ENCODE measurements at regions of chr13 and their contacts with region 1.

Region 1: DNA sequence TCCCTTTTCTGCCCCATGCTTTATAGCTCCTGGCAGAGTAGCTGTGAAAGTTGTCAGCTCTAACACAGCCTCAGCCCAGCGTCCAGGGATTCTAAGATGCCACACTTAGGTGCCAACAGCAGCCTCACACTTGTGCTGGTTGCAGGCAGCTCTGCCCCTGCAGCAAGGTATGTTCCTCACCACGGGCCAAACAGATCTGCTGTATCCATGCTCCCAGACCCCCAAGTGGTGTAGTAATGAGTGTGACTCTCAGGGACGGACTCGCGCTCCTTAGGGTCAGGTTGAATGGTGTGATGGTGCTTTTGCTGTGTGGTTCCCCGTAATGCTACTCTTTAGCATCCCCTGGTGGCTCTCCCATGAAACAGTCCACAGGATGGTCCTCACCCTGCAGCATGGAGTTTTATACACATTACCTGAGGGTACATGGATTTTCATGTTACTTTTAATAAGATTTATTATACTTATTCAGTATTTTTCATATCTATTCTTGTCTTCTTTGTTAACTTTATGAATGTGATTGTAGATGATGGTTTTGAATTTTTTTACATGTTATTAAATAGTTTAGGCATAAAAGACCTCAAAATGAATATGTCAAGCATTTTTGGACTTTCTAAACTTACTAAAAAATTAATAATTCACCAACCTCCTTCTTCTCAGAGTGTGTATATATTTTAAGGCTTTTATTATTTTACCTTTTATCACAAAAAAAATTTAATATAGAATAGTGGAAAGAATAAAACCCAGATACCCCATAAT is 232.5 kb downstream of the SLC7A1 start:
- DNase-seq: peak; percentile 64
- ATAC-seq: peak; percentile 98
- H3K4me3 Mint-ChIP-seq: no peak overlapping the region
- H3K27ac Mint-ChIP-seq: no peak overlapping the region
- H3K4me1 Mint-ChIP-seq: 0 out of 2 replicates have a peak, but pooled peaks cover 2% of the 10 kb centered on the region
- H3K27me3 Mint-ChIP-seq: peaks cover 4% of the 10 kb centered on the region; the same call in 1 of the 2 replicates
- CTCF ChIP-seq: peak; percentile 91

Region 2: DNA sequence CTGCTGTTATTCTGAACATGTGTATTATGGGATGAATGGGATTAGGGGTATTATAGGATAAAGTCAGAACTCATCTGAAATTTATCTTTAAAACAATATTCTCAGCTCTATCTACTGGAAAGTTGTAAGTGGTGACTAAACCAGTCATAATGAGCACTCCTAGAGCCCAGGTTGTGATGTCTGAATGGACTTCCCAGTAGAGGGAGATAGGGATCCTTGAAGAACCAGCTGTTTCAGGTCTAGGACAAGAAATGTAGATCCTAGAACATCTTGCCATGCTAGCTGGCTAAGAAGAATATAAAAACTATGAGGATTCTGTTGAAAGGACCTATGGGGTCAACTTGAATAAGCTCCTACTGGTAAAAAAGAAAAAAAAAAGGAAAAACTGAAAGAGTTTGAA is 78.3 kb before region 1 on chr13:
- CTCF ChIA-PET with region 1: interaction called, 19 read pairs
- POLR2A ChIA-PET with region 1: no interaction called
- DNase-seq: no peak
- ATAC-seq: peak; percentile 28; the same call in 1 of the 2 replicates
- H3K4me3 Mint-ChIP-seq: no peak overlapping the region
- H3K27ac Mint-ChIP-seq: no peak overlapping the region
- H3K4me1 Mint-ChIP-seq: no peaks in the 10 kb centered on the region
- H3K27me3 Mint-ChIP-seq: no peaks in the 10 kb centered on the region
- CTCF ChIP-seq: no peak

Region 3: GRCh38 chr13:29339386-29340272 is 23.4 kb before region 1 on chr13:
- CTCF ChIA-PET with region 1: no interaction called
- POLR2A ChIA-PET with region 1: no interaction called
- DNase-seq: no peak
- ATAC-seq: no peak
- H3K4me3 Mint-ChIP-seq: no peak overlapping the region
- H3K27ac Mint-ChIP-seq: no peak overlapping the region
- H3K4me1 Mint-ChIP-seq: no peaks in the 10 kb centered on the region
- H3K27me3 Mint-ChIP-seq: no peaks in the 10 kb centered on the region; the same call in 1 of the 2 replicates
- CTCF ChIP-seq: no peak

Region 4: DNA sequence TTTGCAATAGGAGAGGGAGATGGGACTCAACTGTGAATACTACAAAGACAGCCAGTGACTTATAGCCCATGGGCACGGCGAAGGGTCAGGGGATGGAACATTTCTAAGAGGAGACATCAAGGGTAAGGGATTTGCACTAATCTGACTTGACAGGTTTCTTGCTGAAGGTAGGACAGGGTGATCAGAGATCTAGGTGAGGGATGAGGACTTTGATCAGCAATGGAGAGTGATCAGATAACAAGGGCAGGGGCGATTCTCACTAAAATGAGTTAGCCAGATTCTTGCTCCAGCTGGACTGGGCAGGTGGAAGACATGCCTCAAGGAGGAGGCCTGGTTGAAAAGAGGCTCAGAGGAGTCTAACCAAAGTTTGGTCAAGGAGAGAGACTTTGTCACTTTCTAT is 23.2 kb after region 1 on chr13:
- CTCF ChIA-PET with region 1: no interaction called
- POLR2A ChIA-PET with region 1: no interaction called
- DNase-seq: no peak
- ATAC-seq: no peak
- H3K4me3 Mint-ChIP-seq: no peak overlapping the region
- H3K27ac Mint-ChIP-seq: no peak overlapping the region
- H3K4me1 Mint-ChIP-seq: peaks cover 3% of the 10 kb centered on the region; the same call in 1 of the 2 replicates
- H3K27me3 Mint-ChIP-seq: no peaks in the 10 kb centered on the region; the same call in 1 of the 2 replicates
- CTCF ChIP-seq: no peak

Measured in WTC11 (cell line).